B cell (primary cell): ENCODE measurements at regions of chr22 and their contacts with region 1.

Region 1: GRCh38 chr22:23857606-23858483 is at the start of gene SLC2A11:
- DNase-seq: peak; percentile 99
- ATAC-seq: peak; percentile 93
- H3K4me3 ChIP-seq: peak within 1 kb of the TSS; percentile 74 to 94 (median 91)
- H3K4me3 Mint-ChIP-seq: peak within 1 kb of the TSS; percentile 95
- H3K27ac ChIP-seq: peak within 1 kb of the TSS; percentile 78 to 81
- H3K27ac Mint-ChIP-seq: peak within 1 kb of the TSS; percentile 99
- H3K4me1 ChIP-seq: peaks cover 15 to 25% of the 10 kb centered on the region in 2 donors
- H3K4me1 Mint-ChIP-seq: peaks cover 26% of the 10 kb centered on the region
- H3K27me3 ChIP-seq: no peaks in the 10 kb centered on the region
- H3K27me3 Mint-ChIP-seq: no peaks in the 10 kb centered on the region
- CTCF ChIP-seq: peak; percentile 8
- total RNA-seq, gene SLC2A11: 54.3 and 61.5 TPM in 2 replicates

Region 2: DNA sequence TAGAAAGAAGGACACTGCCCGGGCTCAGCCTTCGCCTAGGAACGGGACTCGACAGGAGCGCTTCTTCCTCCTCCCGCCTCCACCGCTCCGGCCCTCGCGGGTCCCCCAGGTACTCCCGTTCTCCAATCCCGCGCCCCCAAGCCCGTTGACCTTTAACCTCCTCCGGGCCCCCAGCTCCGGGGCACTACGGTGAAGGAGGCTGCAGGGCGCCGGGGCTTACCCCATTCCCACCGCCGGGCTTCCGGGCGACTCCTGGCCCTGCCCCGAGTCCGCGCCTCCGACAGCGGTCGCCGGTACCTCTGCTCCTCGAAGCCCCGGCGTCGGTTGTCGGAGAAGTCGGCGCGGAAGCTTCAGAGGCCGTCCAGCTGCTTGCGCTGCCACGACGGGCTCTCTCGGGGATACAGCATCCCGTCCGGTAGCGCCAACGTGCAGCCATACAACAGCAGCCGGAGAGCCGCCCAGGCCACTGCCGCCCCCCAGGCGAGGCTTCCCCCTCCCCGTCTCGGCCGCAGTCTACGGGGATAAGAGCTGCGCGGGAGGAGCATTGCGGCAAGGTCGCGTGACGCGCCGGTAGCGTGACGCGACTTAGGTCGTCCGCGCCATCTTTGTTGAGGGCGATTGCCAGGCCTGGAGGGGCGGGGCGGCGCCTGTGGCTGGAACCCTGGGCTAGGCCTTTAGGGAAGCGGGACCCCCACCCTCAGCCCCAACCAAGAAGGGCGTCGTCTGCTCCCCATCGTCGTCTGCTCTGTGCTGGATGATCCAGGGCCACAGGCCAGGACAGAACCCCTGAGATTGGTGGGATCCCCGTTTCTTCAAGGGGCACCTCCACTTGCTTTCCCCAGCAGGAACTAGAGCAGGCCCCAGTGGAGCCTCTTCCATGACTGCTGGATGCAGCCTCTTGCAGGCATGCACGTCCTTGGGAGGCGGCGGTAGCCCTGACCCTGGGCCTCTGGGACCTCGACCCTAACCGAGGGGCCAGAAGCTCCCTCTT is 140.7 kb before region 1 on chr22:
- CTCF ChIA-PET with region 1: interaction called, 3 read pairs
- POLR2A ChIA-PET with region 1: interaction called, 7 read pairs
- intact Hi-C with region 1: loop called (anchors 5 kb)
- DNase-seq: peak; percentile 89
- ATAC-seq: peak; percentile 95
- H3K4me3 ChIP-seq: peak overlapping the region in 4 of 5 experiments; percentile 82 to 88 (median 88)
- H3K4me3 Mint-ChIP-seq: peak overlapping the region; percentile 89
- H3K27ac ChIP-seq: peak overlapping the region; percentile 61 to 84
- H3K27ac Mint-ChIP-seq: peak overlapping the region; percentile 89
- H3K4me1 ChIP-seq: peaks cover 13 to 19% of the 10 kb centered on the region in 2 donors
- H3K4me1 Mint-ChIP-seq: peaks cover 20% of the 10 kb centered on the region
- H3K27me3 ChIP-seq: no peaks in the 10 kb centered on the region
- H3K27me3 Mint-ChIP-seq: no peaks in the 10 kb centered on the region
- CTCF ChIP-seq: no peak

Region 3: DNA sequence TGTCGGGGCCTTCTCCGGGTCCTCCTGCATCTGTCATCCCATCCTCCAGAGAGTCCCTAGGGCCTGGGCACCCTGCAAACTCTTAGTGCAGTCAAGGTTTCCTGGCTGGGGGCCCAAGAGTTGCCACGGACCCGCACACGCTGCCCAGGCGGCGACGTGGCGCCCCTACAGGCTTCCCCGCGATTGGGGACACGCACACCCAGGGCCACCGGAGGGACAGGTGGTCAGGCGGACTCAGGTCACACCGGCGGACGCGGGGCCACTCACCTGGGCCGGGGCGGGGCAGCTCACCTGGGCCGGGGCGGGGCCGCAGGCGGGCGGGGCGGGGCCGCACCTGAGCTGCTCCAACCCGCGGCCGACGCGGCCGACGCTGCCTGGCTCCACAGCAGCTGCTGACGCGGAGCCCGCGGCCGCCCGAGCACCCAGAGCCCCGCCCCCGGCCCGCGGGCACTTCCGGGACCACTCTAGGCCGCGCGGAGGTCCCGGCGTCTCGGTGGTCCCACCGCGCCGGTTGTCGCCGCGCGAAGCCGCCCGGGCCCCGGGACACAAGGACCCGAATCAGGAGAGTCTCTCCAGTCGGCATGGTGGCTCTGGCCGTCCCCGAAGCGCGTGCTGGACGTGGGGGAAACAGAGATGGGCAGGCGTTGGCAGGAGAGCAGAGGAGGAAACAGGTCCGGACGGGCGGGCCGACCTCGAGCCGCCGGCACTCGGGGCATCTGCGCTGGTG is 107.0 kb before region 1 on chr22 and contains the start of gene ZNF70:
- CTCF ChIA-PET with region 1: interaction called, 6 read pairs
- POLR2A ChIA-PET with region 1: interaction called, 22 read pairs
- intact Hi-C with region 1: no loop called
- DNase-seq: peak; percentile 92
- ATAC-seq: peak; percentile 56
- H3K4me3 ChIP-seq: peak within 1 kb of the TSS; percentile 6 to 88 (median 83)
- H3K4me3 Mint-ChIP-seq: peak within 1 kb of the TSS; percentile 93
- H3K27ac ChIP-seq: peak within 1 kb of the TSS; percentile 85 to 98
- H3K27ac Mint-ChIP-seq: peak within 1 kb of the TSS; percentile 99
- H3K4me1 ChIP-seq: peaks cover 24 to 53% of the 10 kb centered on the region in 2 donors
- H3K4me1 Mint-ChIP-seq: peaks cover 55% of the 10 kb centered on the region
- H3K27me3 ChIP-seq: no peaks in the 10 kb centered on the region
- H3K27me3 Mint-ChIP-seq: no peaks in the 10 kb centered on the region
- CTCF ChIP-seq: no peak
- total RNA-seq, gene ZNF70: 8.3 and 9.6 TPM in 2 replicates

Region 4: GRCh38 chr22:23800297-23801237 is 57.3 kb before region 1 on chr22:
- CTCF ChIA-PET with region 1: no interaction called
- POLR2A ChIA-PET with region 1: interaction called, 11 read pairs
- intact Hi-C with region 1: no loop called
- DNase-seq: peak; percentile 89
- ATAC-seq: peak; percentile 70
- H3K4me3 ChIP-seq: peak overlapping the region in 4 of 5 experiments; percentile 0 to 44 (median 4)
- H3K4me3 Mint-ChIP-seq: peak overlapping the region; percentile 81
- H3K27ac ChIP-seq: peak overlapping the region; percentile 92 to 93
- H3K27ac Mint-ChIP-seq: peak overlapping the region; percentile 96
- H3K4me1 ChIP-seq: peaks cover 63 to 76% of the 10 kb centered on the region in 2 donors
- H3K4me1 Mint-ChIP-seq: peaks cover 70% of the 10 kb centered on the region
- H3K27me3 ChIP-seq: no peaks in the 10 kb centered on the region
- H3K27me3 Mint-ChIP-seq: no peaks in the 10 kb centered on the region
- CTCF ChIP-seq: no peak

Region 5: DNA sequence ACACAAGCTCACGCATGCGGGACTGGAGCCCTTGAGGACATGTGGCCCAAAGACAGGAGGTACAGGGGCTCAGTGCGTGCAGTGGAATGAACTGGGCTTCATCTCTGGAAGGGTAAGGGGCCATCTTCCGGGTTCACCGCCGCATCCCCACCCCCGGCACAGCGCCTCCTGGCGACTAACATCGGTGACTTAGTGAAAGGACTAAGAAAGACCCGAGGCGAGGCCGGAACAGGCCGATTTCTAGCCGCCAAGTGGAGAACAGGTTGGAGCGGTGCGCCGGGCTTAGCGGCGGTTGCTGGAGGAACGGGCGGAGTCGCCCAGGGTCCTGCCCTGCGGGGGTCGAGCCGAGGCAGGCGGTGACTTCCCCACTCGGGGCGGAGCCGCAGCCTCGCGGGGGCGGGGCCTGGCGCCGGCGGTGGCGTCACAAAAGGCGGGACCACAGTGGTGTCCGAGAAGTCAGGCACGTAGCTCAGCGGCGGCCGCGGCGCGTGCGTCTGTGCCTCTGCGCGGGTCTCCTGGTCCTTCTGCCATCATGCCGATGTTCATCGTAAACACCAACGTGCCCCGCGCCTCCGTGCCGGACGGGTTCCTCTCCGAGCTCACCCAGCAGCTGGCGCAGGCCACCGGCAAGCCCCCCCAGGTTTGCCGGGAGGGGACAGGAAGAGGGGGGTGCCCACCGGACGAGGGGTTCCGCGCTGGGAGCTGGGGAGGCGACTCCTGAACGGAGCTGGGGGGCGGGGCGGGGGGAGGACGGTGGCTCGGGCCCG is 36.3 kb after region 1 on chr22 and contains the start of gene MIF:
- CTCF ChIA-PET with region 1: interaction called, 24 read pairs
- POLR2A ChIA-PET with region 1: interaction called, 32 read pairs
- intact Hi-C with region 1: loop called (anchors 5 kb)
- DNase-seq: peak; percentile 96
- ATAC-seq: peak; percentile 92
- H3K4me3 ChIP-seq: peak within 1 kb of the TSS; percentile 26 to 88 (median 84)
- H3K4me3 Mint-ChIP-seq: peak within 1 kb of the TSS; percentile 93
- H3K27ac ChIP-seq: peak within 1 kb of the TSS; percentile 87 to 89
- H3K27ac Mint-ChIP-seq: peak within 1 kb of the TSS; percentile 98
- H3K4me1 ChIP-seq: peaks cover 13 to 19% of the 10 kb centered on the region in 2 donors
- H3K4me1 Mint-ChIP-seq: peaks cover 28% of the 10 kb centered on the region
- H3K27me3 ChIP-seq: no peaks in the 10 kb centered on the region
- H3K27me3 Mint-ChIP-seq: no peaks in the 10 kb centered on the region
- CTCF ChIP-seq: peak; percentile 76
- total RNA-seq, gene MIF: 125 and 143 TPM in 2 replicates

Region 6: GRCh38 chr22:24175160-24175808 is 317.4 kb after region 1 on chr22:
- CTCF ChIA-PET with region 1: no interaction called
- POLR2A ChIA-PET with region 1: no interaction called
- intact Hi-C with region 1: loop called (anchors 5 kb)
- DNase-seq: peak; percentile 69
- ATAC-seq: peak; percentile 73
- H3K4me3 ChIP-seq: no peak overlapping the region
- H3K4me3 Mint-ChIP-seq: no peak overlapping the region
- H3K27ac ChIP-seq: no peak overlapping the region
- H3K27ac Mint-ChIP-seq: peak overlapping the region; percentile 67
- H3K4me1 ChIP-seq: no peaks in the 10 kb centered on the region
- H3K4me1 Mint-ChIP-seq: no peaks in the 10 kb centered on the region
- H3K27me3 ChIP-seq: no peaks in the 10 kb centered on the region
- H3K27me3 Mint-ChIP-seq: no peaks in the 10 kb centered on the region
- CTCF ChIP-seq: peak; percentile 71

Region 7: GRCh38 chr22:24185501-24186351 is 327.9 kb after region 1 on chr22:
- CTCF ChIA-PET with region 1: no interaction called
- POLR2A ChIA-PET with region 1: no interaction called
- intact Hi-C with region 1: no loop called
- DNase-seq: no peak
- ATAC-seq: no peak
- H3K4me3 ChIP-seq: no peak overlapping the region
- H3K4me3 Mint-ChIP-seq: no peak overlapping the region
- H3K27ac ChIP-seq: no peak overlapping the region
- H3K27ac Mint-ChIP-seq: no peak overlapping the region
- H3K4me1 ChIP-seq: peaks cover 4 to 16% of the 10 kb centered on the region in 2 donors
- H3K4me1 Mint-ChIP-seq: peaks cover 6% of the 10 kb centered on the region
- H3K27me3 ChIP-seq: no peaks in the 10 kb centered on the region
- H3K27me3 Mint-ChIP-seq: no peaks in the 10 kb centered on the region
- CTCF ChIP-seq: no peak